Activated CD8-positive, alpha-beta T cell treated with anti-CD3 and anti-CD28 coated beads for 36 hours (primary cell): ENCODE measurements at regions of chr6 and their contacts with region 1.

Region 1: DNA sequence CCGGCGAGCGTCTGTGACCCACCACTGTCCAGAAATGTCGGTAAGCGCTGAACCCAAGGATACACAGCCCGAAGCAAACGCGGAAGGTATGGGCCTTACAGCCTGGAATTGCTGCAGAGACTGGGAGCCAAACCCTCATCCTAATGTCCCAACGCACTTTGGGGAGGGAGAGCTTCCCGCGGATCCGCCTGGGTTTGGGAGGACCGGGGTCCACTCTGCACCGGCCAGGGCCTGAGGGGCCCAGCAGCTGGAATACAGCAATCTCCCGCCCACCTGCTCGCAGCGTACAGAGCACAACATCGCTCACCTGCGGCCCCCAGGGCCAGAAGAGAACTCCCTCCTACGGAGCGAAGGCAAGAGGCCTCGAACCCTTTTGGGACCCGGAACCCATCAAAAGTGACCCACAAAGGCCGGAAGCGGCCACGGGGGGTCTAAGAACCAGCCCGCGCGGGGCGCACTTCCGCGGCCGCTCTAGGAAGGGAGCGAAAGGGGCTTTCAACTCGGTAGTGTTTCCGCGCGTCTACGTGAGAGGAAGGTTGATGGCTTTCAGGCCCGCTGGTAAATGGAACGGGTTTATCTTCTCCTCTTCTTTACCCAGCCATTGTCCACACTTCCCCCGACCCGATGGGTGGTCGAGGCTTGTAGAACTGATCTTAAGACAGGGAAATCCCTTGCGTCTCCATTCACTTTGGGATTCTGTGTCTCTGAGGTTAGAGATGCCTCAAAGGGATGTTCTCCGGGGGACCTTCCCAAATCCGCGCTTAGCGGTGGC is at the start of gene ZSCAN12:
- DNase-seq: peak; percentile 94
- ATAC-seq: peak; percentile 96
- H3K4me3 Mint-ChIP-seq: peak within 1 kb of the TSS; percentile 91
- H3K27ac Mint-ChIP-seq: peak within 1 kb of the TSS; percentile 96
- H3K4me1 Mint-ChIP-seq: peaks cover 42% of the 10 kb centered on the region
- H3K27me3 Mint-ChIP-seq: peaks cover 25% of the 10 kb centered on the region
- CTCF ChIP-seq: peak; percentile 63
- total RNA-seq, gene ZSCAN12: 7.1 to 7.4 TPM

Region 2: GRCh38 chr6:28443112-28443773 is 43.7 kb after region 1 on chr6 and contains the start of gene ZSCAN23:
- CTCF ChIA-PET with region 1: no interaction called
- POLR2A ChIA-PET with region 1: no interaction called
- intact Hi-C with region 1: loop called (anchors 5 kb)
- DNase-seq: peak; percentile 94
- ATAC-seq: peak; percentile 85
- H3K4me3 Mint-ChIP-seq: peak within 1 kb of the TSS; percentile 98
- H3K27ac Mint-ChIP-seq: peak within 1 kb of the TSS; percentile 96
- H3K4me1 Mint-ChIP-seq: peaks cover 28% of the 10 kb centered on the region
- H3K27me3 Mint-ChIP-seq: peaks cover 32% of the 10 kb centered on the region
- CTCF ChIP-seq: no peak
- total RNA-seq, gene ZSCAN23: 1.1 to 1.6 TPM